ENCODE measurements at regions of chr1 and their contacts with region 1.

Region 1: GRCh38 chr1:147676290-147677053 is 6.1 kb upstream of the ACP6 start:
- DNase-seq: peak; percentile 28 to 54
- ATAC-seq: peak; percentile 66 to 85
- H3K4me3 ChIP-seq: no peak overlapping the region
- H3K27ac ChIP-seq: peak overlapping the region; percentile 65 to 83; a peak in 5 of 6 replicates
- H3K4me1 ChIP-seq: peaks cover 25% of the 10 kb centered on the region
- CTCF ChIP-seq: no peak
- EP300 ChIP-seq: no peak
- POLR2A ChIP-seq: no peak
- RAD21 ChIP-seq: no peak

Region 2: GRCh38 chr1:147585640-147586383 is 90.7 kb before region 1 on chr1:
- CTCF ChIA-PET with region 1: no interaction called
- POLR2A ChIA-PET with region 1: no interaction called
- DNase-seq: no peak
- ATAC-seq: no peak
- H3K4me3 ChIP-seq: no peak overlapping the region
- H3K27ac ChIP-seq: no peak overlapping the region
- H3K4me1 ChIP-seq: no peaks in the 10 kb centered on the region
- CTCF ChIP-seq: no peak
- EP300 ChIP-seq: no peak
- POLR2A ChIP-seq: no peak
- RAD21 ChIP-seq: no peak

Region 3: DNA sequence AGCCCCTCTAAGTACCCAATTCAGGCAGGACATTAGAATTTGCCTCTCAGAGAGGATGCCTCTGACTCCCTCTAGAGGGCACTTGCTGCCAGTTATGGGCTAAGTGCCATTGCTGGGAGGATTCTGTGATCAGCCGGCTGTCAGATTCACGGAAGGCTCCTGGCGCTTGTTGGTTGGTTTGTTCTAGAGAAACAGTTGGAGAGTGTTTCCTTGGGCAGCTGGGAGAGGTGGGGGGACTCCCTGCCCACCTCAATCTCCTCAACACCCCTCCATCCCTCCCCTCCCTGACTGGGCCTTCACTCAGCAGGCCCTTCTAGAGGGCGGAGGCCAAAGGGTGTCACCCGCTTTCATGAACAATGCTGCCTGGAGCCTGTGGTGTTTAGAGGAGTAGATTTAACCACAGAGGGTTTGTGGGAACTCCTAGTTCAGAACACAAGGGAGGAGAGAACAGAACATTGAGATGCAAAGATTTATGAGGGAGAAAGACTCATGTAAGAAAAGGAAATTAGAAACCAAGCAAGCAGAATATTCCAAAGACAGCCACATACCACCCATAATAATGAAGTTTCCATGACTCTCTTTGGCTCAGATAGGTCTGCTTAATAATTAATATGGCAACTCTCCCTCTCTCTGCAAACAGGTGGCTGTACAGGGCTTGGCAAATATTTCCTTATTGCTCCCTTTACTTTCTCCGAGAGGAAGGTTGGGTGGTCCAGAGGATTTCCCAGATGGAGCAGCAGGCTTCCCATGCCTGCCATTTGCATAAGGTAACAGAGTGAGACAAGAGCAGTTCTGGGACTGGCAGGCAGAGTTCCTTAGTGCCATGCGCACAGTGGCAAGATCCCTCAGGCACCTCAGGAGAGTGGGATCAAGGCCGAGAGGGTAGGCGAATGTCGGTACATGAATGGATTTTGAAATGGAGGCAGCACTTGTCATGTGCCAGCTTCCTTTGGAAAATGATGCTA is 23.9 kb after region 1 on chr1:
- CTCF ChIA-PET with region 1: interaction called, 13 read pairs
- POLR2A ChIA-PET with region 1: no interaction called
- DNase-seq: peak; percentile 55 to 71
- ATAC-seq: peak; percentile 94 to 98
- H3K4me3 ChIP-seq: no peak overlapping the region
- H3K27ac ChIP-seq: no peak overlapping the region
- H3K4me1 ChIP-seq: 0 out of 3 replicates have a peak, but pooled peaks cover 3% of the 10 kb centered on the region
- CTCF ChIP-seq: peak; percentile 74
- EP300 ChIP-seq: no peak
- POLR2A ChIP-seq: no peak
- RAD21 ChIP-seq: peak; percentile 71 to 75